A673 (cell line): ENCODE measurements at regions of chr11 and their contacts with region 1.

Region 1: DNA sequence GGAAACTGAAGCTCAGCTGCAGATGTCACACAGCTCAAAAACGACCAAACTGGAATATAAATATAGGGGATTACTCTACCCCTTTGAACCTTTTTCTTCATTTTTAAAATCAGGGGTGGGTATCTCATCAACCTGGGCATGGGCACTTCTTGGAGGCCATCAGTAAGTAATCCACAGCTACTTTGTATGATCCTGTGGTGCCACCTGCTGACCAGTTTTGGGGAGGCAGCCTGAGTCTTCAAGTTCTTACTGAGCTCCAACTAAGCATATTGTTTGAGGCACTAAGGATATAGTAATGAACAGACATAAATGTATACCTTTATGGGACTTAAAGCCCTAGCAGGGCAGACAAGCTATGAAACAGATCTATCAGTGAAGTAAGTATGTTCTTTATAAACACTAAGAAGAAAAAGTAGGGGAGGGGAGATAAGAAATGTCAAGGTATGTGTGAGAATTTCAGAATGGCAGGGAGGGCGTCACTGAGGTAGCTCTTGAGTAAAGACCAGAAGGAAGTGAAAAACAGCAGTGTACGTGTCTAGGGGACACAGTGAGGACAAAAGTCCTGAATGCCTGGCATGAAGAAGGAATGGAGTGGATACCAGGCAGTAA is 18.4 kb downstream of the TUB start:
- DNase-seq: peak; percentile 71
- H3K4me3 ChIP-seq: no peak overlapping the region
- H3K27ac ChIP-seq: no peak overlapping the region
- H3K4me1 ChIP-seq: no peaks in the 10 kb centered on the region
- H3K27me3 ChIP-seq: no peaks in the 10 kb centered on the region
- CTCF ChIP-seq: peak; percentile 79

Region 2: GRCh38 chr11:7098235-7098832 is 1001.1 kb before region 1 on chr11:
- CTCF ChIA-PET with region 1: no interaction called
- POLR2A ChIA-PET with region 1: no interaction called
- intact Hi-C with region 1: loop called (anchors 10 kb)
- DNase-seq: peak; percentile 49
- H3K4me3 ChIP-seq: no peak overlapping the region
- H3K27ac ChIP-seq: no peak overlapping the region
- H3K4me1 ChIP-seq: no peaks in the 10 kb centered on the region
- H3K27me3 ChIP-seq: peaks cover 12% of the 10 kb centered on the region
- CTCF ChIP-seq: peak; percentile 62

Region 3: GRCh38 chr11:7892840-7893254 is 206.5 kb before region 1 on chr11:
- CTCF ChIA-PET with region 1: no interaction called
- POLR2A ChIA-PET with region 1: no interaction called
- intact Hi-C with region 1: loop called (anchors 2 kb)
- DNase-seq: peak; percentile 58
- H3K4me3 ChIP-seq: no peak overlapping the region
- H3K27ac ChIP-seq: no peak overlapping the region
- H3K4me1 ChIP-seq: no peaks in the 10 kb centered on the region
- H3K27me3 ChIP-seq: no peaks in the 10 kb centered on the region
- CTCF ChIP-seq: peak; percentile 69

Region 4: GRCh38 chr11:8006349-8006977 is 92.9 kb before region 1 on chr11:
- CTCF ChIA-PET with region 1: interaction called, 24 read pairs
- POLR2A ChIA-PET with region 1: no interaction called
- intact Hi-C with region 1: loop called (anchors 1 kb)
- DNase-seq: peak; percentile 62
- H3K4me3 ChIP-seq: no peak overlapping the region
- H3K27ac ChIP-seq: no peak overlapping the region
- H3K4me1 ChIP-seq: no peaks in the 10 kb centered on the region
- H3K27me3 ChIP-seq: no peaks in the 10 kb centered on the region
- CTCF ChIP-seq: peak; percentile 70

Region 5: DNA sequence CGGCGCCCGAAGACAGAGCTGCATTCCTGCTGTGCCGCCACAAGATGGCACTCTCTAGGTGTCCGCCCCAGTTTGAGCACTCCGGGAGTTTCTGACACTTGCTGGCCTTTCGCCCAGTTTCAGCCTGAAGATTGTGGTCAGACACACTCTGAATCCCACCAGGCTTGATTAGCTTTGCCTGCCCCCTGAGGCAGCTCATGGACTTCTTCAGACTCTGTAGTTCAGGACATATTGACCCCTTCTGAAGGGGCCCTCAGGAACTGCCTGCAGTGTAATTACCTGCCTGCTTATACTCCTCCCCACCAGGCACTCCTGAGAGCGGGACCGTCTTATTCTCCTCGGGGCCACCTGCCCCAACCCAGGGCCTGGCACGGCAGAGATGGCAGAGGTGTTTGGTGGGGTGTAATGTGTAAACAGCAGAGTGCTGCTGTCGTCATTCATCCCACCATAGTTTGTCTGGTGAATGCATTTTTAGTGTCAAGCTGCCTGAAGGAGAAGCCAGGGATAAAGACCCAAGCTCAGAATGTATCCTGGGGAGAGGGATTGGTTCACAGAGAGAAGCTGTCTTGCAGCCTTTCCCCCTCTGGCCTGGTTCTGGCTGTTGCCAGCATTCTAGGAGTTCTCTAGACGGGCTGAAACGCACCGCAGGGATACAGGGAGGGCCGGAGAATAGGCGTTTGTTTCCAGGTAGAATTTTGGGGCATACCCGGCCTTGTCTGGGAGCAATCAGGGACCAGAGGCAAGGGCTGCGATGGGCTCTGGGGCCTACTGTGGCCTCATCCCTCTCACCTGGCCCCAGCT is 65.9 kb before region 1 on chr11:
- CTCF ChIA-PET with region 1: interaction called, 20 read pairs
- POLR2A ChIA-PET with region 1: no interaction called
- intact Hi-C with region 1: loop called (anchors 2 kb)
- DNase-seq: peak; percentile 70
- H3K4me3 ChIP-seq: no peak overlapping the region
- H3K27ac ChIP-seq: no peak overlapping the region
- H3K4me1 ChIP-seq: no peaks in the 10 kb centered on the region
- H3K27me3 ChIP-seq: peaks cover 5% of the 10 kb centered on the region
- CTCF ChIP-seq: peak; percentile 80